PC-3 (cell line): ENCODE measurements at regions of chr5 and their contacts with region 1.

Region 1: DNA sequence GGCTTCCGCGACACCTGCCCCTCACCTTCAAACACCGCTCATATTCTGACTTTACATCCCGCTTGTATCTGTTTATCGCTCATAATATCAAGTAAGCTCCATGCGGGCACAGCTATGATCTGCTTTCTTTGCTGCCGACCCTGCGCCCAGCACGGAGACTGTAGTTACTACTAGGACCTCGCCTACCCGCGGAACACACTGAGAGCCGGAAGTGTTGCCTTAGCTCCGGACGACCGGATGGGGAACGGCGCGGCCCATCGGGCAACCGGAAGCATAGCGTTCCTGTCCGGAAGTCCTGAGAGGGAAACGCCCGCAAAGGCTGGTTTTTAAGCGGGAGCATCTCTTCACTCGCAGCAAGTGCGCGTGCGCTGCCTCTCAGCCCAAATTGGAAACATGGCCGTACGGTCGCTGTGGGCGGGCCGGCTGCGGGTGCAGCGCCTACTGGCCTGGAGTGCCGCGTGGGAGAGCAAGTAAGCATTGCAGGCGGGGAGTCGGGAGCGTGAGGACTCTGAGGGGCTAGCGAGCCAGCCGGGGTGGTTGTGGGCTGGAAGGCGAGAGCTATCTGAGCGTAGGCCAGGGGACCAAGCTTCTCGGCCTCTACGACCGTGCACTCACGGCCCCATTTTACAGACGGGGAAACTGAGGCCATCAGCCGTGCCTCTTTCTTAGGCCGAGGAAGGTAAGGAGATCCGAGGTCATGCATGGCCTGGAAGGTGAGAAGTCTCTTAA is at the start of gene GRPEL2:
- DNase-seq: peak; percentile 100
- ATAC-seq: peak; percentile 97
- H3K4me3 ChIP-seq: peak within 1 kb of the TSS; percentile 81
- H3K27ac ChIP-seq: peak within 1 kb of the TSS; percentile 42
- H3K4me1 ChIP-seq: peaks cover 22% of the 10 kb centered on the region
- H3K27me3 ChIP-seq: no peaks in the 10 kb centered on the region
- CTCF ChIP-seq: no peak
- total RNA-seq, gene GRPEL2: 43.8 and 49.4 TPM in 2 replicates

Region 2: GRCh38 chr5:149357370-149358293 is 12.3 kb after region 1 on chr5 and contains the start of gene PCYOX1L:
- CTCF ChIA-PET with region 1: interaction called, 4 read pairs
- POLR2A ChIA-PET with region 1: interaction called, 12 read pairs
- intact Hi-C with region 1: loop called (anchors 1 kb)
- DNase-seq: peak; percentile 100
- ATAC-seq: peak; percentile 99
- H3K4me3 ChIP-seq: peak within 1 kb of the TSS; percentile 89
- H3K27ac ChIP-seq: no peak within 1 kb of the TSS
- H3K4me1 ChIP-seq: peaks cover 15% of the 10 kb centered on the region
- H3K27me3 ChIP-seq: no peaks in the 10 kb centered on the region
- CTCF ChIP-seq: no peak
- total RNA-seq, gene PCYOX1L: 11.9 and 12.8 TPM in 2 replicates

Region 3: GRCh38 chr5:149471406-149472183 is 126.3 kb after region 1 on chr5:
- CTCF ChIA-PET with region 1: no interaction called
- POLR2A ChIA-PET with region 1: interaction called, 15 read pairs
- intact Hi-C with region 1: no loop called
- DNase-seq: peak; percentile 65
- ATAC-seq: peak; percentile 81
- H3K4me3 ChIP-seq: no peak overlapping the region
- H3K27ac ChIP-seq: peak overlapping the region; percentile 34
- H3K4me1 ChIP-seq: peaks cover 24% of the 10 kb centered on the region
- H3K27me3 ChIP-seq: no peaks in the 10 kb centered on the region
- CTCF ChIP-seq: no peak